ENCODE measurements at regions of chr16 and their contacts with region 1.

Region 1: DNA sequence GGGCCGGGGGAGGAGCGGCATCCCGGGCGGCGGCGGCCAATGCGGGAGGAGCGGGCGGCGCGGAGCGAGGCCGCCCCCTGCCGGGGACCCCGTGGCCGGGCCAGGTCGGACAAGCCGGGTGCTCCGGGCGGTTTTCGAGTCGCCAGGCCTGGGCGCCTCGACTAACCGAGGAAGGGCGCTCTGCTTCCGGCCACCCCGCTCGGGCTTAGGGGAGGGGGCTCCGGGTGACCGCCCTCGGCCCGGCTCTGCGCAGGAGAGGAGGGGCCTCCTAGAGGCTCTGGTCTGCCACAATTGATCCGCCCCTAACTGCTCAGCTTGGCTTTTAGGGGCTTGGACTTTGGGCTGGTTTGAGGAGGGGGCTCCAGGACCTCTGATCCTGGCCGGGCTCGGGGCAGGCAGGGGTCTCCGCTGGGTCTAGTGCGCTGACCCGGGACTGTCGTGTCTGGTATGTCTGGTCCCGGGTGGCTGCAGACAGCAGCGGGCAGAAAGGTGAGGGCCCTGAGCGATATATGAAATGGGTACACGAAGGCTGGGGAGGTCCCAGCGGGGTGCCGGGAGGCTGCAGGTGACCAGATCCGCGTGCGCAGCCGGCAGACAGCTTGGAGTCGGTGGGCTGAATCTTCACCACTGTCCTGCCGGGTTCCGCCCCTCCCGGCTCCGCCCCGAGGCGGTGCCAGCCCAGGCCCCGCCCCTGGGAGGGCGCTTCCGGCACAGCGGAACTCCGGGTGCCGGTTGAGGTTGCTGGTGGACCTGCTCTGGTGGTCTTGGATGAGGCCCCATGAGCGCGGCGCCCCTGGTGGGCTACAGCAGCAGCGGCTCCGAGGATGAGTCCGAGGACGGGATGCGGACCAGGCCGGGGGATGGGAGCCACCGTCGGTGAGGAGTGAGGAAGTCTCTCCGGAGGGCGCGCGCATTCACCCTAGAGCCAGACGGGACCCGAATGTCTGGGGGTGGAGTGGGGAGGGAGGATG is at the start of gene USB1:
- DNase-seq: peak; percentile 58 to 95 (median 89)

Region 2: DNA sequence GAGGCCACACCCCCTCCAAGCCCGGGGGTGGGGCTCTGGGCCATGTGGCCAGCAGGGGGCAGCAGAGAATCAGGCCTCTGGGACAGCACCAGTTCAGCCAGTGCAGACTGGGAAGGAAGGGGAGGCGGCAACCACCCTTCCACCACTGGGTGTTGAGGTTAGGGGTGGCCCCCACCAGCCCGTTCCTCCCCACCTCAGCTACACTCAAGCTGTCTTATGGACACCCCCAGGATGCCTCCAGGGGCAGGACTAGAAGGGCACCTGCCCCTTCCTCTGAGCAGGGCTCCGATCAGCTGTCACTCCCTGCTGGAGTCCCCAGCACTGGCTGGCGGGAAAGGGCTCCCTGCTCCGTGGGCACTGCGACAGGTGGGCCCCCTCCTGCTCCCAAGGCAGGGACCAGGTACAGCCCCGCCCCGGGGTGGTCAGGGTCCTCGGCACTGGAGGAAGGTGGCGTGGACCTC is 243.6 kb before region 1 on chr16:
- intact Hi-C with region 1: loop called (anchors 10 kb)
- DNase-seq: peak; percentile 72 to 96 (median 90)

Region 3: GRCh38 chr16:57899771-57900661 is 101.0 kb before region 1 on chr16:
- intact Hi-C with region 1: loop called (anchors 5 kb)
- DNase-seq: peak; percentile 22 to 93 (median 83)

Measured in head of caudate nucleus (tissue), 42 donors.